ENCODE measurements at regions of chr4 and their contacts with region 1.

Region 1: DNA sequence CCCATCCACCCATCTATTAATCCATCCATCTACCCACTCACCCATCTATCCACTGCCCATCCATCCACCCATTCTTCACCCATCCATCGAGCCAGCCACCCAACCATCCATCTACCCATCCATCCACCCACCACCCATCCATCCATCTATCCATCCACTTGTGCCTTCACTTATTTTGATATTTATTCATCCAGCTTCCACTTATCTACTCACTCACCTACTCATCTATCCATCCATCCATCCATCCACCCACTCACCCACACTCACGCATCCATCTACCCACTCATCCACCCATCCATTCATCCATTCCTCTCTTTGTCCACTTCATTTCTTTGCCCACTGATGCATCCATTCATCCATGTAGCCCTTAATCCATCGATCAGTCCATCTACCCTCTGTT is 72.9 kb upstream of the AFAP1 start:
- DNase-seq: no peak
- H3K4me3 ChIP-seq: no peak overlapping the region
- H3K27ac ChIP-seq: no peak overlapping the region
- H3K4me1 ChIP-seq: no peaks in the 10 kb centered on the region
- H3K27me3 ChIP-seq: no peaks in the 10 kb centered on the region
- CTCF ChIP-seq: no peak
- POLR2A ChIP-seq: no peak

Region 2: GRCh38 chr4:8058031-8058479 is 45.5 kb after region 1 on chr4:
- CTCF ChIA-PET with region 1: no interaction called
- POLR2A ChIA-PET with region 1: interaction called, 12 read pairs
- dilution Hi-C with region 1: no loop called
- intact Hi-C with region 1: no loop called
- DNase-seq: no peak
- H3K4me3 ChIP-seq: no peak overlapping the region
- H3K27ac ChIP-seq: no peak overlapping the region
- H3K4me1 ChIP-seq: no peaks in the 10 kb centered on the region
- H3K27me3 ChIP-seq: no peaks in the 10 kb centered on the region
- CTCF ChIP-seq: no peak
- POLR2A ChIP-seq: no peak

Measured in endothelial cell of umbilical vein (primary cell).